Right ventricle myocardium inferior (tissue), 1 donor: ENCODE measurements at regions of chr21 and their contacts with region 1.

Region 1: GRCh38 chr21:33199516-33200217 is 30.1 kb upstream of the IFNAR2 start:
- DNase-seq: no peak
- ATAC-seq: peak; percentile 80

Region 2: GRCh38 chr21:32807717-32808380 is 391.8 kb before region 1 on chr21:
- intact Hi-C with region 1: no loop called
- DNase-seq: no peak
- ATAC-seq: peak; percentile 66

Region 3: DNA sequence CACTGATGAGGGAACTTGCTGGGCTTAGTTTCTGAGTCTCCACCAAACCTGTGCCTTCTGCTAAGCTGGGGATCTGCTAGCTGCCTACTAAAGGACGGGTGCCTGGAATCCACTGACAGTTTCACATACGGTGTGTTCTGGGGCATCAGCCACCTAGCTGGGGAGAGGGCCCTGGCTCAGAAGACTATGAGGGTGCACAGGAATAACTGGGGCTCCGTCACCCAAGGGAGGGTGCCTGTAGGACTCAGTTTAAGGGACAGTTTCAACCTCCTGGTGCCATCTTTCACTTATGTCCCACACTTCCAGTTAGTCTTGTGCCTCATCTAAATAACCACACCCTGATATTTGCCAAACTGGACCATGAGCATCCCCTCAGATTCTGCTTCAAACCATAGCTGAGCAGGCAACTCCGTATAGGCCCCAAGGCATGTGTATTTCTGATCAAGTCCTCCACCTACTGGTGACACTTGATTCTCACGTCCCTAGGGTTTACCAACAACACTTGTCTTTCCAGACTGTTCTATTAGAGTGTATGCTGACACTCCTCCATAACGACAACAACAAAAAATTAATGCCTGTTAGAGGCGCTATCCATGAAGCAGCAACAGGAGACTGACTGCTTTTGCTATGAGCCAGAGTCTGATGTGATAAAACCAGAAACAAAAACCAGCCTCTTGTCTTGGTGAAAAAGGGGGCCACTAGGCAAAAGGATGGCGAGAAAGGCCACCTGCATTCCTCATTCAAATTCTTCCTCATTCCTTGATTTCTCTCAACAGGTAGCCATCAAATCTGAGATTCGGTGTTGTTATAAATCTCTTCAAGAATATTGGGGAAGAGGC is 373.1 kb before region 1 on chr21:
- intact Hi-C with region 1: loop called (anchors 5 kb)
- DNase-seq: no peak
- ATAC-seq: peak; percentile 80

Region 4: DNA sequence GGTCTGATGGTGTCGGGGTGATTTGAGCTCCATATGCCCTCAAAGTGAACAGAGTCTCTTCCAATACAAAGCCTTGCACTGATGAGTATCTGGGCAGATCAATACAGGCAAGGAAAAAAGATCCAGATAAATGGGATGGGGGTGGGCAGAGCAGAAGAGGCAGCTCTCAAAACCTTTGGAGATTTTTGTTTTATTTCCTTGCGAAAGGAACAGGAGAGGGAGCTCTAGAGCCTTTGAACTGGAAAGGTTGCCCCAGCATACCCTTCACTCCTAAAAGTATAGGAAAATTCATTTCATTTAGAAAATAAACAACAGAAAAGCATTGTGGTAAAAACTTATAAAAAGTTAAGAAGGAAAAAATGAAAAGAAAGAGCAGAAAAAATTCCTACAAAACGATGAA is 205.4 kb before region 1 on chr21:
- intact Hi-C with region 1: loop called (anchors 2 kb)
- DNase-seq: no peak
- ATAC-seq: no peak

Region 5: GRCh38 chr21:33162436-33162951 is 37.2 kb before region 1 on chr21:
- intact Hi-C with region 1: no loop called
- DNase-seq: no peak
- ATAC-seq: no peak

Region 6: GRCh38 chr21:33244082-33244778 is 44.6 kb after region 1 on chr21:
- intact Hi-C with region 1: no loop called
- DNase-seq: no peak
- ATAC-seq: peak; percentile 39

Region 7: GRCh38 chr21:33324291-33325221 is 124.9 kb after region 1 on chr21 and contains the start of gene IFNAR1:
- intact Hi-C with region 1: loop called (anchors 2 kb)
- DNase-seq: peak; percentile 100
- ATAC-seq: peak; percentile 99
- total RNA-seq, gene IFNAR1: 31.6 TPM

Region 8: DNA sequence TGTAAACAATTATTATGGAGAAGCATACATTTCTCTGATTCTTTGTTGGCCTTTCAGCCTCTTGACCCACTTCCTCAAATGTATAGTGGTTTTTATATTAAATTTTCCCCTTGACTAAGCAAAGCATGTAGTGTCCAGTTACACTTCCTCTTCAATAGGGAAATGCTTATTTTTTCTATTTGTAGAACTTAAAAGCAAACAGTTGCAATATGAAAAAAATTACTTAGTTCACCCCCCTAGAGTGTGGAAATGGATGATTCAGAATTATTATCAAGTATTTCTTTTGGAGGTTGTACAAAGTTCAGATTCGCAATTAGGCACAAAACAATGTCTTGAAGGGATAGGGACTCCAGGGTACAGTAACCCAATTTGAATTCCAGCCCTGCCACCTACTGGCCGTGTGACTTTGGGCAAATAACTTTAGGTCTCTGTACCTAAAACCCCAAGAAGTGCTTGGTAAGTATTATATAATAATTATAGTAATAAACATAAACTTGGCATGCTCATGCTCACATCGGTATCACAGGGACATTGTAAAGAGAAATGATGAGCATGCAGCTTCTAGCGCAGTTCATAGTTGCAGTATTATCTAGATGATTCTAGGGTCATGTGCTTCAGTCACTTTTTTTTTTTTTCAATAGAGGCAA is 174.9 kb after region 1 on chr21:
- intact Hi-C with region 1: loop called (anchors 2 kb)
- DNase-seq: no peak
- ATAC-seq: peak; percentile 73